ENCODE measurements at regions of chr11 and their contacts with region 1.

Region 1: GRCh38 chr11:68127714-68128681 is 6.8 kb upstream of the CHKA start:
- DNase-seq: peak; percentile 90
- ATAC-seq: peak; percentile 84
- H3K4me3 ChIP-seq: peak overlapping the region; percentile 59 to 78 (median 62)
- H3K27ac ChIP-seq: peak overlapping the region; percentile 99
- H3K4me1 ChIP-seq: peaks cover 67% of the 10 kb centered on the region
- H3K27me3 ChIP-seq: no peaks in the 10 kb centered on the region
- CTCF ChIP-seq: peak; percentile 37; the same call in 1 of the 2 replicates
- EP300 ChIP-seq: peak in 1 of 2 experiments; percentile 74; a peak in 3 of 4 replicates
- POLR2A ChIP-seq: no peak
- RAD21 ChIP-seq: peak; percentile 46

Region 2: GRCh38 chr11:68099474-68100405 is 28.3 kb before region 1 on chr11:
- CTCF ChIA-PET with region 1: no interaction called
- POLR2A ChIA-PET with region 1: interaction called, 14 read pairs
- in situ Hi-C with region 1: no loop called
- intact Hi-C with region 1: no loop called
- DNase-seq: peak; percentile 99
- ATAC-seq: peak; percentile 95
- H3K4me3 ChIP-seq: peak overlapping the region in 2 of 3 experiments; percentile 22 to 23; a peak in 2 of 6 replicates
- H3K27ac ChIP-seq: peak overlapping the region; percentile 94
- H3K4me1 ChIP-seq: peaks cover 80% of the 10 kb centered on the region
- H3K27me3 ChIP-seq: no peaks in the 10 kb centered on the region
- CTCF ChIP-seq: no peak
- EP300 ChIP-seq: peak in 1 of 2 experiments; percentile 96; a peak in 3 of 4 replicates
- POLR2A ChIP-seq: peak in 1 of 2 experiments; percentile 76; a peak in 2 of 4 replicates
- RAD21 ChIP-seq: no peak

Region 3: DNA sequence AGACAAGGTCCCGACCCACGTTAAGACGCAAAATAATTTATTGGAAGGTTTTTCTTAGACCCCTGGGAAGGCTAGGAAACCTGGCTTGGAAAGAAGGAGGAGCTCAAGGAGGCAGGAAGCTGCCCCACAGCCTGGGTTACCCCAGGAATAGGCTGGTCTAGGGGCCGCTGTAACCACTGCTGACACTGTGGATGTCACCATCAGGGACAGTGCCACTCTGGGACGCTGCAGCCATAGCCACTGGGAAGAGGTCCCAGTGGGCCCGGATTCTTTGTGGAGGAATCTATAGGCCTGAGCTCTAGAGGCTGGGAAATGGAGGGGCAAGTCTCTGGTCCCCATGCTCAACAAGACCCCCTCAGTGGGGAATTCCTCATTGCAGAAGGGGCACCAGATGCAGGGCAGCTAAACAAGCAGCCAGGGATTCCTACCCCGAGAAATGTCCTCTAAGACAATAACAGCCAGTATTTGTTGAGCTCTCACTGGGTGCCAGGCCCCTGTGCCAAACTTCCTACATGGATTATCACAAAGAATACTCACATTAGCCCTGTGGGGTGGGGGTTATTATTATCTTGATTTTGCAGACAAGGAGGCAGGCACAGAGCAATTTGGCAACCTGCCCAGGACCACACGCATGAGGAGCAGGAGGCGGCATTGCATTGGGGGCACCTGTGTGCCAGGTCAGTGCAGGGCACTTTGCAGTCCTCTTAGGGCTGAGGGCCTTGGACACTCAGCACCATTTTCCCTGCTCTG is 12.7 kb after region 1 on chr11:
- CTCF ChIA-PET with region 1: no interaction called
- POLR2A ChIA-PET with region 1: interaction called, 196 read pairs
- in situ Hi-C with region 1: no loop called
- intact Hi-C with region 1: no loop called
- DNase-seq: no peak
- ATAC-seq: no peak
- H3K4me3 ChIP-seq: no peak overlapping the region
- H3K27ac ChIP-seq: no peak overlapping the region
- H3K4me1 ChIP-seq: peaks cover 90% of the 10 kb centered on the region
- H3K27me3 ChIP-seq: no peaks in the 10 kb centered on the region
- CTCF ChIP-seq: no peak
- EP300 ChIP-seq: no peak
- POLR2A ChIP-seq: no peak
- RAD21 ChIP-seq: no peak

Region 4: DNA sequence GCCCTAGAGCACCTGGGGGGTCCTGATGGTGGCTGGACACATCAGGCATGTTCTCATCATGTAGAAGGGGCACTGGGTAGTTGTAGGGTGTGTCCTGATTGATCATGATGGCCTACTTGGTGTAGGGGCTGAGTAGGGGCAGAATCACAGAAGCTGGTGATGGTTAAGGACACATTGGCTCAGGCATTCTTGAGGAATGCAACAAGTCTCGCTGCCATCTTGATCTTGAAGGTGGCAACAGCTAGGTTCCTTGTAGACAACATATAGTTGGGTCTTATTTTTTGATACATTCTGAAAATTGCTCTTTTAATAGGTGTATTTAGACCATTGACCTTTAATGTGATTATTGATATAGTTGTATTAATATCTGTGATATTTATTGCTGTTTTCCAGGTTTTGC is 360.6 kb after region 1 on chr11:
- CTCF ChIA-PET with region 1: no interaction called
- POLR2A ChIA-PET with region 1: no interaction called
- in situ Hi-C with region 1: no loop called
- intact Hi-C with region 1: no loop called
- DNase-seq: no peak
- ATAC-seq: no peak
- H3K4me3 ChIP-seq: no peak overlapping the region
- H3K27ac ChIP-seq: no peak overlapping the region
- H3K4me1 ChIP-seq: peaks cover under 1% of the 10 kb centered on the region; the same call in 1 of the 2 replicates
- H3K27me3 ChIP-seq: no peaks in the 10 kb centered on the region
- CTCF ChIP-seq: no peak
- EP300 ChIP-seq: no peak
- POLR2A ChIP-seq: no peak
- RAD21 ChIP-seq: no peak

Measured in HepG2 (cell line).